ENCODE measurements at regions of chr19 and their contacts with region 1.

Region 1: GRCh38 chr19:33804021-33804799 is 7.5 kb downstream of the KCTD15 start:
- DNase-seq: no peak
- H3K4me3 ChIP-seq: no peak overlapping the region
- H3K4me3 Mint-ChIP-seq: no peak overlapping the region
- H3K27ac ChIP-seq: no peak overlapping the region
- H3K27ac Mint-ChIP-seq: peak overlapping the region in 2 of 7 donors; percentile 46 to 50
- H3K4me1 ChIP-seq: peaks cover 18% of the 10 kb centered on the region
- H3K4me1 Mint-ChIP-seq: peaks cover 12 to 34% (median 15%) of the 10 kb centered on the region in 4 donors
- H3K27me3 ChIP-seq: no peaks in the 10 kb centered on the region
- H3K27me3 Mint-ChIP-seq: peaks cover 0 to 4% of the 10 kb centered on the region in 2 donors

Region 2: GRCh38 chr19:33819880-33820781 is 15.9 kb after region 1 on chr19:
- CTCF ChIA-PET with region 1: interaction called, 8 read pairs
- POLR2A ChIA-PET with region 1: interaction called, 18 read pairs
- intact Hi-C with region 1: no loop called
- DNase-seq: peak; percentile 52 to 68 (median 64)
- H3K4me3 ChIP-seq: peak overlapping the region; percentile 47 to 48
- H3K4me3 Mint-ChIP-seq: peak overlapping the region; percentile 76 to 86 (median 80)
- H3K27ac ChIP-seq: peak overlapping the region; percentile 36
- H3K27ac Mint-ChIP-seq: peak overlapping the region in 6 of 7 donors; percentile 29 to 77 (median 70)
- H3K4me1 ChIP-seq: peaks cover 18% of the 10 kb centered on the region
- H3K4me1 Mint-ChIP-seq: peaks cover 8 to 48% (median 33%) of the 10 kb centered on the region in 4 donors
- H3K27me3 ChIP-seq: no peaks in the 10 kb centered on the region
- H3K27me3 Mint-ChIP-seq: no peaks in the 10 kb centered on the region

Measured in CD4-positive, alpha-beta memory T cell (primary cell).